GM12878 (cell line): ENCODE measurements at regions of chr16 and their contacts with region 1.

Region 1: DNA sequence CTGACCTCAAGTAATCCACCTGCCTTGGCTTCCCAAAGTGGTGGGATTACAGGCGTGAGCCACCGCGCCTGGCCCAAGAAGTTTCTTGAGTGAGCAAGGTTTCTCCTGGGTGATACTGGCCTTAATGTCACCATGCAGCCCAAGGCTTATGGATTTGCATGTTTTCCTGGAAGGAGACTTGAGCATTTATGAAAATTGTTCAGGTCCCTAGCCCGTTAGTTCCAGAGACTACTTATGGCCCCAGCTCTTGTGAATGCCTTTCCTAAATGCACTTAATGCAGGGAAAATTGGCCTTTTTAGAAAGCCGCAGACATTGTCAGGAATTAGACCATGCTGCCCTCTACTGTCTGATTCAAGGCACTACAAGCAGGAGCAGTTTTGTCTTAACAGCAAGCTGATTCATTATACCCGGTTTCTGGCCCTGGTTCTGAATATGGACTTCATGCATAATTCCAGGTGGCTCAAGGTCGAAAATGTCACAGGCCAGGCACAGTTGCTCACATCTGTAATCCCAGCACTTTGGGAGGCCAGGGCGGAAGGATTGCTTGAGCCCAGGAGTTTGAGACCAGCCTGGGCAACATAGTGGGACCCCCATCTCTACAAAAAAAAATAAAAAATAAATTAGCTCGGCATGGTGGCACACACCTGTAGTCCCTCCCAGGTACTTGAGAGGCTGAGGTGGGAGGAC is 91.3 kb downstream of the SNX29 start:
- DNase-seq: no peak
- ATAC-seq: peak; percentile 89
- H3K4me3 ChIP-seq: no peak overlapping the region
- H3K27ac ChIP-seq: no peak overlapping the region
- H3K4me1 ChIP-seq: no peaks in the 10 kb centered on the region
- H3K27me3 ChIP-seq: no peaks in the 10 kb centered on the region
- CTCF ChIP-seq: peak; percentile 85 to 94 (median 92)
- EP300 ChIP-seq: no peak
- POLR2A ChIP-seq: no peak
- RAD21 ChIP-seq: peak; percentile 96

Region 2: GRCh38 chr16:11915644-11916523 is 152.0 kb before region 1 on chr16 and contains the start of gene GSPT1:
- CTCF ChIA-PET with region 1: interaction called, 10 read pairs
- POLR2A ChIA-PET with region 1: no interaction called
- RAD21 ChIA-PET with region 1: interaction called, 4 read pairs
- SMC1A ChIA-PET with region 1: interaction called, 6 read pairs
- in situ Hi-C with region 1: no loop called
- intact Hi-C with region 1: no loop called
- DNase-seq: peak; percentile 90
- ATAC-seq: peak; percentile 89
- H3K4me3 ChIP-seq: peak within 1 kb of the TSS; percentile 71
- H3K27ac ChIP-seq: peak within 1 kb of the TSS; percentile 87
- H3K4me1 ChIP-seq: peaks cover 9% of the 10 kb centered on the region
- H3K27me3 ChIP-seq: no peaks in the 10 kb centered on the region
- CTCF ChIP-seq: 0 out of 6 replicates have a peak, but pooled peaks of 2 of the 3 experiments have one; percentile 16 to 17
- EP300 ChIP-seq: no peak
- POLR2A ChIP-seq: peak; percentile 92
- RAD21 ChIP-seq: no peak
- polyA plus RNA-seq, gene GSPT1: 46.7 to 63.5 TPM

Region 3: GRCh38 chr16:11957591-11958395 is 110.1 kb before region 1 on chr16:
- CTCF ChIA-PET with region 1: interaction called, 23 read pairs
- POLR2A ChIA-PET with region 1: interaction called, 4 read pairs
- RAD21 ChIA-PET with region 1: interaction called, 13 read pairs
- SMC1A ChIA-PET with region 1: interaction called, 20 read pairs
- in situ Hi-C with region 1: no loop called
- intact Hi-C with region 1: no loop called
- DNase-seq: no peak
- ATAC-seq: no peak
- H3K4me3 ChIP-seq: no peak overlapping the region
- H3K27ac ChIP-seq: no peak overlapping the region
- H3K4me1 ChIP-seq: peaks cover 20% of the 10 kb centered on the region
- H3K27me3 ChIP-seq: no peaks in the 10 kb centered on the region
- CTCF ChIP-seq: no peak
- EP300 ChIP-seq: no peak
- POLR2A ChIP-seq: no peak
- RAD21 ChIP-seq: no peak

Region 4: DNA sequence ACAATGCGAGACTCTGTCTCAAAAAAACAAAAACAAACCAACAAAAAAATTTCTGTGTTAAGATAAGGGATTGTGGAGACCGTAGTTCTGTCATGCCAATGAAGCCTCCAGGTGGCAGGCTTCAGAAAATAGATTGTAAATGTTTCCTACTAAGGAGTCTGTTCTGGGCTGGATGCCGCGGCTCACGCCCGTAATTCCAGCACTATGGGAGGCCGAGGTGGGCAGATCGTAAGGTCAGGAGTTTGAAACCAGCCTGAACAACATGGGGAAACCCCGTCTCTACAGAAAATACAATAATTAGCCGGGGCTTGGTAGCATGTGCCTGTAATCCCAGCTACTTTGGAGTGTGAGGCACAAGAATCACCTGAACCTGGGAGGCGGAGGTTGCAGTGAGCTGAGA is 95.7 kb before region 1 on chr16:
- CTCF ChIA-PET with region 1: interaction called, 18 read pairs
- POLR2A ChIA-PET with region 1: no interaction called
- RAD21 ChIA-PET with region 1: interaction called, 20 read pairs
- SMC1A ChIA-PET with region 1: interaction called, 7 read pairs
- in situ Hi-C with region 1: no loop called
- intact Hi-C with region 1: no loop called
- DNase-seq: no peak
- ATAC-seq: no peak
- H3K4me3 ChIP-seq: no peak overlapping the region
- H3K27ac ChIP-seq: no peak overlapping the region
- H3K4me1 ChIP-seq: peaks cover 19% of the 10 kb centered on the region
- H3K27me3 ChIP-seq: no peaks in the 10 kb centered on the region
- CTCF ChIP-seq: peak; percentile 18 to 28 (median 21); a peak in 2 of 6 replicates
- EP300 ChIP-seq: no peak
- POLR2A ChIP-seq: no peak
- RAD21 ChIP-seq: no peak; the same call in 1 of the 2 replicates

Region 5: GRCh38 chr16:11994143-11995119 is 73.4 kb before region 1 on chr16:
- CTCF ChIA-PET with region 1: interaction called, 17 read pairs
- POLR2A ChIA-PET with region 1: interaction called, 3 read pairs
- RAD21 ChIA-PET with region 1: interaction called, 4 read pairs
- SMC1A ChIA-PET with region 1: interaction called, 13 read pairs
- in situ Hi-C with region 1: no loop called
- intact Hi-C with region 1: no loop called
- DNase-seq: no peak
- ATAC-seq: peak; percentile 69
- H3K4me3 ChIP-seq: no peak overlapping the region
- H3K27ac ChIP-seq: peak overlapping the region; percentile 38; the same call in 1 of the 2 replicates
- H3K4me1 ChIP-seq: peaks cover 7% of the 10 kb centered on the region
- H3K27me3 ChIP-seq: no peaks in the 10 kb centered on the region
- CTCF ChIP-seq: peak in 1 of 3 experiments; percentile 10; a peak in 1 of 6 replicates
- EP300 ChIP-seq: no peak
- POLR2A ChIP-seq: no peak
- RAD21 ChIP-seq: no peak

Region 6: DNA sequence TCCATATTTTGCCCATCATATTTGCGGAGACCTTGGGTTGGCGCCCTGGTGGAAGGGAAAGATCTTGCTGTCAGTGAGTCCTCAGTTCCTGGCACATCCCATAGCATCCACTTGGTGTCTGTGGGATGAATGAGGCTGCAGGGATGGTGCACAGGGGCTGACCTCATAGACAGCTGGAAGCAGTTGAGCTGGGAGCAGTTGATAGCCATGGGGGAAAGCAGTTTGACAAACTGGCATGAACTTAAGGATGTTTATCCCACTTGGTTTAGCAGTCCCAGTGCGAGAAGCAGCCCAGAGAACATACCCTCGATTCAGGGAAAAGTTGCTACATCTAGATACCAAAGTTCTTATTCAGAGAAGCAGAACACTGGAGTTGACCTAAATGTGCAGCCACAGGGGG is 10.6 kb before region 1 on chr16:
- CTCF ChIA-PET with region 1: interaction called, 8 read pairs
- POLR2A ChIA-PET with region 1: interaction called, 6 read pairs
- RAD21 ChIA-PET with region 1: interaction called, 5 read pairs
- SMC1A ChIA-PET with region 1: interaction called, 13 read pairs
- in situ Hi-C with region 1: no loop called
- intact Hi-C with region 1: no loop called
- DNase-seq: no peak
- ATAC-seq: no peak
- H3K4me3 ChIP-seq: no peak overlapping the region
- H3K27ac ChIP-seq: no peak overlapping the region
- H3K4me1 ChIP-seq: peaks cover 11% of the 10 kb centered on the region
- H3K27me3 ChIP-seq: no peaks in the 10 kb centered on the region
- CTCF ChIP-seq: no peak
- EP300 ChIP-seq: no peak
- POLR2A ChIP-seq: no peak
- RAD21 ChIP-seq: no peak

Region 7: DNA sequence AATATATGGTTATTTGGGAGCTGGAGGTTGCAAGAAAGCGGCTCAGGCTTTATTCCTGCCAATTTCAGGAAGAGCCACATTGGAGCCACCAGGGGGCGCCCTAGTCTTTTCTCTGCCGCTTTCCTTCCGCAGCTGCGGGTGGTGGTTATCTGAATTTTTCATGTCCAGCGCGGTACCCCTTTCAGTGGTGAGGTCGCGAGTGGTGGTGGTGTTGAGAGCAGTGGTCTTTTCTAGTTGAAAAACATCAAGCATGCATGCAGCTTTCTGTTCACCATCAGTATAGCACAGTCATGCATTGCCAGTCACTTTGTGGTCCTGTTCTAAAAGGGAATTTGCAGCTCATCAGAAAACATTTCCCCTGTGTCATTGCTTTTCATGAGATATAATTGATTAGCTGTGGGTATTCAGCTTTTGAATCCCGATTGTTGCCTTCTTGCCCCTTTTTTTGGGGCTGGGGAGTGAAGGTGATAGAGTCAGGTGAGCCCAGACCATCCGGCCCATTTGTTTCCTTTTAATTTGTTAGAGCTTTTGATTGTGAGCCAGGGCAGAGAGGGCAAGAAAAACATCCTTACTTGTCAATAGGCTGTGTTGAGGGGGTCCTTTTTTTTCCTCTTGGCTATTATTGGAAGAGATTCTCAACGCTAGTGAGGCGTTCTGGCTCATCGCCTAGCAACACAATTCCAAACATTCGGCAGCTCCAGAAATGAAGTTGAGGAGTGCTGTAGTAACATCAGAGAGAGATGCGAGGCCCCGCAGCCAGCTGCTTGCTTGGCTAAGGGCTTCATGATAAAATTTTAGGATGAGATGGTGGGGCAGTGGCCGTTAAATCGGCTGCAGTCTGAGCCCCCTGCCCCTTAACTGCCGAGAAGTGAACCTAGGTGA is 27.7 kb after region 1 on chr16:
- CTCF ChIA-PET with region 1: interaction called, 17 read pairs
- POLR2A ChIA-PET with region 1: no interaction called
- RAD21 ChIA-PET with region 1: no interaction called
- SMC1A ChIA-PET with region 1: interaction called, 3 read pairs
- in situ Hi-C with region 1: no loop called
- intact Hi-C with region 1: no loop called
- DNase-seq: no peak
- ATAC-seq: peak; percentile 82
- H3K4me3 ChIP-seq: no peak overlapping the region
- H3K27ac ChIP-seq: no peak overlapping the region
- H3K4me1 ChIP-seq: no peaks in the 10 kb centered on the region
- H3K27me3 ChIP-seq: no peaks in the 10 kb centered on the region
- CTCF ChIP-seq: peak; percentile 77 to 84 (median 84)
- EP300 ChIP-seq: no peak
- POLR2A ChIP-seq: no peak
- RAD21 ChIP-seq: peak; percentile 74